Endothelial cell of umbilical vein (primary cell): ENCODE measurements at regions of chr9 and their contacts with region 1.

Region 1: GRCh38 chr9:77751341-77752091 is 103.4 kb upstream of the GNA14 start:
- DNase-seq: peak; percentile 85
- H3K4me3 ChIP-seq: no peak overlapping the region
- H3K27ac ChIP-seq: peak overlapping the region; percentile 55
- H3K4me1 ChIP-seq: peaks cover 24% of the 10 kb centered on the region
- H3K27me3 ChIP-seq: no peaks in the 10 kb centered on the region
- CTCF ChIP-seq: peak; percentile 40 to 56
- POLR2A ChIP-seq: no peak

Region 2: GRCh38 chr9:77291714-77292113 is 459.8 kb before region 1 on chr9:
- CTCF ChIA-PET with region 1: interaction called, 22 read pairs
- POLR2A ChIA-PET with region 1: no interaction called
- dilution Hi-C with region 1: no loop called
- intact Hi-C with region 1: loop called (anchors 1 kb)
- DNase-seq: peak; percentile 43
- H3K4me3 ChIP-seq: no peak overlapping the region
- H3K27ac ChIP-seq: no peak overlapping the region
- H3K4me1 ChIP-seq: no peaks in the 10 kb centered on the region
- H3K27me3 ChIP-seq: no peaks in the 10 kb centered on the region
- CTCF ChIP-seq: peak; percentile 47 to 48
- POLR2A ChIP-seq: no peak

Region 3: GRCh38 chr9:77456829-77457437 is 294.6 kb before region 1 on chr9:
- CTCF ChIA-PET with region 1: interaction called, 214 read pairs
- POLR2A ChIA-PET with region 1: no interaction called
- dilution Hi-C with region 1: no loop called
- intact Hi-C with region 1: loop called (anchors 1 kb)
- DNase-seq: peak; percentile 93
- H3K4me3 ChIP-seq: no peak overlapping the region
- H3K27ac ChIP-seq: no peak overlapping the region
- H3K4me1 ChIP-seq: no peaks in the 10 kb centered on the region
- H3K27me3 ChIP-seq: no peaks in the 10 kb centered on the region
- CTCF ChIP-seq: peak; percentile 81 to 90
- POLR2A ChIP-seq: no peak

Region 4: GRCh38 chr9:77588271-77588937 is 163.1 kb before region 1 on chr9:
- CTCF ChIA-PET with region 1: interaction called, 8 read pairs
- POLR2A ChIA-PET with region 1: no interaction called
- dilution Hi-C with region 1: no loop called
- intact Hi-C with region 1: loop called (anchors 2 kb)
- DNase-seq: peak; percentile 92
- H3K4me3 ChIP-seq: peak overlapping the region in 1 of 3 experiments; percentile 24
- H3K27ac ChIP-seq: peak overlapping the region; percentile 93
- H3K4me1 ChIP-seq: peaks cover 35% of the 10 kb centered on the region
- H3K27me3 ChIP-seq: no peaks in the 10 kb centered on the region
- CTCF ChIP-seq: no peak
- POLR2A ChIP-seq: no peak

Region 5: GRCh38 chr9:77673941-77674791 is 77.3 kb before region 1 on chr9:
- CTCF ChIA-PET with region 1: interaction called, 24 read pairs
- POLR2A ChIA-PET with region 1: no interaction called
- dilution Hi-C with region 1: no loop called
- intact Hi-C with region 1: no loop called
- DNase-seq: no peak
- H3K4me3 ChIP-seq: no peak overlapping the region
- H3K27ac ChIP-seq: no peak overlapping the region
- H3K4me1 ChIP-seq: no peaks in the 10 kb centered on the region
- H3K27me3 ChIP-seq: no peaks in the 10 kb centered on the region
- CTCF ChIP-seq: no peak
- POLR2A ChIP-seq: no peak

Region 6: GRCh38 chr9:77764894-77765780 is 13.6 kb after region 1 on chr9:
- CTCF ChIA-PET with region 1: interaction called, 17 read pairs
- POLR2A ChIA-PET with region 1: no interaction called
- dilution Hi-C with region 1: no loop called
- intact Hi-C with region 1: no loop called
- DNase-seq: peak; percentile 58
- H3K4me3 ChIP-seq: no peak overlapping the region
- H3K27ac ChIP-seq: peak overlapping the region; percentile 11
- H3K4me1 ChIP-seq: peaks cover 12% of the 10 kb centered on the region
- H3K27me3 ChIP-seq: no peaks in the 10 kb centered on the region
- CTCF ChIP-seq: peak; percentile 35 to 46
- POLR2A ChIP-seq: no peak

Region 7: GRCh38 chr9:78213712-78214111 is 462.2 kb after region 1 on chr9:
- CTCF ChIA-PET with region 1: interaction called, 3 read pairs
- POLR2A ChIA-PET with region 1: no interaction called
- dilution Hi-C with region 1: no loop called
- intact Hi-C with region 1: loop called (anchors 5 kb)
- DNase-seq: peak; percentile 77
- H3K4me3 ChIP-seq: no peak overlapping the region
- H3K27ac ChIP-seq: no peak overlapping the region
- H3K4me1 ChIP-seq: peaks cover 2% of the 10 kb centered on the region
- H3K27me3 ChIP-seq: no peaks in the 10 kb centered on the region
- CTCF ChIP-seq: peak; percentile 17 to 46
- POLR2A ChIP-seq: no peak